Activated CD4-positive, alpha-beta memory T cell treated with anti-CD3 and anti-CD28 coated beads for 36 hours (primary cell): ENCODE measurements at regions of chr9 and their contacts with region 1.

Region 1: GRCh38 chr9:74773886-74774479 is 113.7 kb downstream of the TRPM6 start:
- DNase-seq: peak; percentile 79
- H3K4me3 Mint-ChIP-seq: no peak overlapping the region
- H3K27ac Mint-ChIP-seq: no peak overlapping the region
- H3K4me1 Mint-ChIP-seq: peaks cover 14% of the 10 kb centered on the region
- H3K27me3 Mint-ChIP-seq: peaks cover 17% of the 10 kb centered on the region

Region 2: GRCh38 chr9:73116031-73116430 is 1658.0 kb before region 1 on chr9:
- CTCF ChIA-PET with region 1: no interaction called
- POLR2A ChIA-PET with region 1: no interaction called
- intact Hi-C with region 1: loop called (anchors 5 kb)
- DNase-seq: no peak
- H3K4me3 Mint-ChIP-seq: no peak overlapping the region
- H3K27ac Mint-ChIP-seq: no peak overlapping the region
- H3K4me1 Mint-ChIP-seq: peaks cover 42% of the 10 kb centered on the region
- H3K27me3 Mint-ChIP-seq: no peaks in the 10 kb centered on the region

Region 3: GRCh38 chr9:74729136-74729695 is 44.8 kb before region 1 on chr9:
- CTCF ChIA-PET with region 1: no interaction called
- POLR2A ChIA-PET with region 1: no interaction called
- intact Hi-C with region 1: no loop called
- DNase-seq: no peak
- H3K4me3 Mint-ChIP-seq: no peak overlapping the region
- H3K27ac Mint-ChIP-seq: no peak overlapping the region
- H3K4me1 Mint-ChIP-seq: no peaks in the 10 kb centered on the region
- H3K27me3 Mint-ChIP-seq: peaks cover 2% of the 10 kb centered on the region

Region 4: GRCh38 chr9:74908665-74909064 is 134.7 kb after region 1 on chr9:
- CTCF ChIA-PET with region 1: no interaction called
- POLR2A ChIA-PET with region 1: no interaction called
- intact Hi-C with region 1: no loop called
- DNase-seq: no peak
- H3K4me3 Mint-ChIP-seq: no peak overlapping the region
- H3K27ac Mint-ChIP-seq: no peak overlapping the region
- H3K4me1 Mint-ChIP-seq: no peaks in the 10 kb centered on the region
- H3K27me3 Mint-ChIP-seq: peaks cover 30% of the 10 kb centered on the region

Region 5: GRCh38 chr9:74952281-74953151 is 178.5 kb after region 1 on chr9 and contains the start of gene C9orf40:
- CTCF ChIA-PET with region 1: interaction called, 11 read pairs
- POLR2A ChIA-PET with region 1: no interaction called
- intact Hi-C with region 1: loop called (anchors 2 kb)
- DNase-seq: peak; percentile 93
- H3K4me3 Mint-ChIP-seq: peak within 1 kb of the TSS; percentile 92
- H3K27ac Mint-ChIP-seq: peak within 1 kb of the TSS; percentile 88
- H3K4me1 Mint-ChIP-seq: peaks cover 22% of the 10 kb centered on the region
- H3K27me3 Mint-ChIP-seq: no peaks in the 10 kb centered on the region
- total RNA-seq, gene C9orf40: 17.6 to 18.3 TPM

Region 6: GRCh38 chr9:75027187-75028107 is 253.5 kb after region 1 on chr9:
- CTCF ChIA-PET with region 1: interaction called, 34 read pairs
- POLR2A ChIA-PET with region 1: no interaction called
- intact Hi-C with region 1: loop called (anchors 5 kb)
- DNase-seq: peak; percentile 68
- H3K4me3 Mint-ChIP-seq: peak overlapping the region; percentile 99
- H3K27ac Mint-ChIP-seq: peak overlapping the region; percentile 97
- H3K4me1 Mint-ChIP-seq: peaks cover 35% of the 10 kb centered on the region
- H3K27me3 Mint-ChIP-seq: no peaks in the 10 kb centered on the region

Region 7: GRCh38 chr9:75083188-75083970 is 309.4 kb after region 1 on chr9:
- CTCF ChIA-PET with region 1: interaction called, 11 read pairs
- POLR2A ChIA-PET with region 1: interaction called, 3 read pairs
- intact Hi-C with region 1: no loop called
- DNase-seq: peak; percentile 49
- H3K4me3 Mint-ChIP-seq: no peak overlapping the region
- H3K27ac Mint-ChIP-seq: no peak overlapping the region
- H3K4me1 Mint-ChIP-seq: peaks cover 31% of the 10 kb centered on the region
- H3K27me3 Mint-ChIP-seq: no peaks in the 10 kb centered on the region

Region 8: DNA sequence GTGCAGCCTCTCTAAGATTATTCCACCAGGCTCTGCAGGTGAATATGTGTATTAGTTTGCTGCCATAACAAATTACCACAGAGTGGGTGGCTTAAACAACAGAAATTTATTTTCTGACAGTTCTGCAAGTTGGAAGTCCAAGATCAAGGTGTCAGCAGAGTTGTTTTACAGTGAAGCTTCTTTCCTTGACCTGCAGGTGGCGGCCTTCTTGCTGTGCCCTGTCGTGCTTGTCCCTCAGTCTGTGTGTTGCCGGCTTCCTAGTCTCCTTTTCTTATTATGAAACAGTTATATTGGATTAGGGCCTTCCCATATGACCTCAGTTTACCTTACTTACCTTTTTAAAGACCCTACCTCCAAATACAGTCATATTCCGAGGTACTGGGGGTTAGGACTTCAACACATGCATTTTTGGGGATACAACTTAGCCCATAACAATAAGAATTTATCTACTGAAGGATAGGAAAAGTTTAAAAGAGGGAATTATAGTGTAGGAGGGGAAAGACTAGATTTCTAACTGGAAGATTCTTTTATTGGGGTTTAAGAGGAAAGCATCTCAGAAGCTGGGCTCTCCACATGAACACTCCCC is 411.7 kb after region 1 on chr9:
- CTCF ChIA-PET with region 1: no interaction called
- POLR2A ChIA-PET with region 1: no interaction called
- intact Hi-C with region 1: loop called (anchors 2 kb)
- DNase-seq: peak; percentile 69
- H3K4me3 Mint-ChIP-seq: no peak overlapping the region
- H3K27ac Mint-ChIP-seq: no peak overlapping the region
- H3K4me1 Mint-ChIP-seq: peaks cover 19% of the 10 kb centered on the region
- H3K27me3 Mint-ChIP-seq: no peaks in the 10 kb centered on the region

Region 9: DNA sequence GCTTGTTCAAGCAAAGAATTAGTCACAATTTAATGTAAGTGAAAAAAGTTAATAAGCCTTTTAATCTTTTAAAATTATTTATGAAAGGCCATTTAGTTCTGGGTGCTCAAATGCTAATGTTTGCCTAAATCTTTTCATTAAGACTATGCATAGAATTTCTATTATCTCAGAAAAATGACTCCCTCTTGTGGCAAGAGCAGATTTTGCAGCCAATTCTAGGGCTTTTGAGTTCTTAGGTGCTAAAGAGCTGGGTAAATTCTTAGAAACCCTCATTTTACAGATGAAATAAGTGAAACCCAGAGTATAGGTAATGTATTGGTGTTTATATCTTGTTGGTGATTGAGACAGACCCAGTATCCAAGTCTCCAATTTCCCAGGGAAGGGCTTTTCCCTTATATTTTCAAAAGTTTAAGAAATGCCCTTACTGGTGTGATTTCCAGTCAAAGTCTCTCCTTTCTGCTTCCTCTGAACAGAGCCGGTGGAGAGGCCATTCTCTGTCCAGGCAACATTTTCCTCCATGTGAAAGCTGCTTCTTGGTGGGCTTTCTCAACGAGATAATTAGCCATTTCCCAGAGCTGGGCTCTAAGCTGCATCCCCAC is 1092.4 kb after region 1 on chr9:
- CTCF ChIA-PET with region 1: interaction called, 3 read pairs
- POLR2A ChIA-PET with region 1: no interaction called
- intact Hi-C with region 1: loop called (anchors 10 kb)
- DNase-seq: peak; percentile 18
- H3K4me3 Mint-ChIP-seq: no peak overlapping the region
- H3K27ac Mint-ChIP-seq: no peak overlapping the region
- H3K4me1 Mint-ChIP-seq: peaks cover 3% of the 10 kb centered on the region
- H3K27me3 Mint-ChIP-seq: peaks cover 7% of the 10 kb centered on the region